ENCODE measurements at regions of chr14 and their contacts with region 1.

Region 1: DNA sequence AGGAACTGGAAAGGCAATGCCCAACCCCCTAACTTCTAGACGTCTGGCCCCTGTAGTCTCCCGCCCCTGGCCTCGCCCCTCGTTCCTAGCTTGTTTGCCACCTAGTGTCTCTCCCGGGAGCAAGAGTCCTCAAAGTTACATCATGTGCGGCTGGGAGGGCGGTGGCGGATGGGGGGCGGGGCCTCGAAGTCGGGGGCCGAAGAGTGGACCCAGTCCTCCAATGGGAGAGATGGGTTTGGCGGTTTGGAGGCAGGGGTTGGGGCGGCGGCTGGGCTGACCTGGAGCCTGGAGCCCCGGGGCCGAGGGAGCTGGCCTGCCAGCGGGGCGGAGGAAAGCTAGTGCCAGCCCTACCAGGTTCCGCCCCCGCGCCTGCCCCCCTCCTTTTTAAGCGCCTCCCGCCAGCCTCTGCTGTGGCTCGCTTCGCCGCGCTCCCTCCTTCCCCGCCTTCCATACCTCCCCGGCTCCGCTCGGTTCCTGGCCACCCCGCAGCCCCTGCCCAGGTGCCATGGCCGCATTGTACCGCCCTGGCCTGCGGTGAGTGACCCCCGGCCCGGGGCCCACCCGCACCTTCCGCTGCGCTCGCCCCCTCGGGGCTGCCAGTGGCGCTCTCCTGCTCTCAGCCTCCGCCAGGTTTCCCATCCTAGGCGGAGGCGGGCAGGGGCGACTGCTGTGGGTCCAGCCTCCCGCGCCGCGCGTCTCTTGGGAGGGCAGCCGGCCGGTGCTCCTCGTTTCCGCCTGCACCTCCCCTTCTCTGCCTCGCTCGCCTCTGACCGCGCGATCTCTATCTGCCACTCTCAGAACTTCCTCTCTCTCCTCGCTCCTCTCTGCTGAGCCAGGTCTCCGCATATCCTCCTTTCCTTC is at the start of gene PCK2:
- DNase-seq: peak; percentile 87
- H3K4me3 Mint-ChIP-seq: peak within 1 kb of the TSS; percentile 100
- H3K27ac Mint-ChIP-seq: peak within 1 kb of the TSS; percentile 96
- H3K4me1 Mint-ChIP-seq: peaks cover 38% of the 10 kb centered on the region
- H3K27me3 Mint-ChIP-seq: no peaks in the 10 kb centered on the region
- total RNA-seq, gene PCK2: 88.5 to 90.6 TPM

Region 2: DNA sequence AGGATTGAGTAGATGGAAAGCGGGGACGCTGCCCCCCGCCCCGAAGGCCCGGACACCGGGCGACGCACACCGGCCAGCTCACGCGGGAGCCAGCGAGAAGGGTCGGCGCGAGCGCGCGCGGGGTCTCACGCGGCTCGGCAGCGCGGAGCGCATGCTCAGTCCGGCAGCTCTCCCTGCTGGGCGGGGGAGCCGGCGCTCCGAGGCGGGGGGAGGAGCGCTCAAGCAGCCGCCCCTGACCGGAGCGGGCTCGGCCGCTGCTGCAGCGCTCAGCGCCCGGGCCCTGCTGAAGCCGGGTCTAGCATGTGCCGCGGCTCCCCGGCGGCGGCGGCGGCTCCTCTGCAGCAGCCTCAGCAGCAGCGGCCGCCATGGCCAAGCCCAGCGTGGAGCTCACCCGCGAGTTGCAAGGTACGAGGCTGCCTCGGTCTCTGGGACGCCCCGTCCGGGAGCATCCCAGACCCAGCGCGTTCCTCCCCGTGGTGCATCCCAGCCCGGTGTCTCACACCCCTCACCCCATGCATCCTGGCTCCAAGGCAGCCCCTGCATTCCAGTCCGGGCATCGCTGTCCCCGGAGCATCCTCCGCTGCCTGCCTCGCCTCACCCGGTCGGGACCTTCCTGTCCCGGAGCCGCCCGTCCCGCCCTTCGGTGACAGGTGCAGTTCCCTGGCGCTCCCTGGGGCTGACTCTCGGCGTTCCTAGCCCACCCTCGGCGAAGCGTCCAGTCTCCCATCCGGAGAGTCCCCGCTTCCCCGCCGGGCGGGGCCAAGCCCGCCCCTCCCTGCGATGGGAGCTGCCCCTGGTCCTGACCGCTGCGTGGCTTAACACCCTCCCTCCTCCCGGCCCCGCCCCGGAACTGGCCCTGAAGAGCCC is 42.1 kb before region 1 on chr14 and contains the start of gene CARMIL3:
- CTCF ChIA-PET with region 1: interaction called, 216 read pairs
- POLR2A ChIA-PET with region 1: interaction called, 53 read pairs
- DNase-seq: peak; percentile 72
- H3K4me3 Mint-ChIP-seq: peak within 1 kb of the TSS; percentile 69
- H3K27ac Mint-ChIP-seq: no peak within 1 kb of the TSS
- H3K4me1 Mint-ChIP-seq: peaks cover 23% of the 10 kb centered on the region
- H3K27me3 Mint-ChIP-seq: peaks cover 26% of the 10 kb centered on the region
- total RNA-seq, gene CARMIL3: 3.7 to 4.2 TPM

Region 3: GRCh38 chr14:24058260-24058950 is 35.7 kb before region 1 on chr14:
- CTCF ChIA-PET with region 1: interaction called, 216 read pairs
- POLR2A ChIA-PET with region 1: interaction called, 53 read pairs
- DNase-seq: peak; percentile 76
- H3K4me3 Mint-ChIP-seq: no peak overlapping the region
- H3K27ac Mint-ChIP-seq: peak overlapping the region; percentile 38
- H3K4me1 Mint-ChIP-seq: peaks cover 9% of the 10 kb centered on the region
- H3K27me3 Mint-ChIP-seq: peaks cover 8% of the 10 kb centered on the region

Region 4: GRCh38 chr14:24080888-24081738 is 13.0 kb before region 1 on chr14:
- CTCF ChIA-PET with region 1: interaction called, 82 read pairs
- POLR2A ChIA-PET with region 1: interaction called, 105 read pairs
- DNase-seq: peak; percentile 83
- H3K4me3 Mint-ChIP-seq: peak overlapping the region; percentile 74
- H3K27ac Mint-ChIP-seq: peak overlapping the region; percentile 75
- H3K4me1 Mint-ChIP-seq: peaks cover 32% of the 10 kb centered on the region
- H3K27me3 Mint-ChIP-seq: peaks cover 11% of the 10 kb centered on the region

Region 5: GRCh38 chr14:24135834-24136542 is 41.9 kb after region 1 on chr14 and contains the start of gene PSME1:
- CTCF ChIA-PET with region 1: interaction called, 6 read pairs
- POLR2A ChIA-PET with region 1: interaction called, 22 read pairs
- DNase-seq: peak; percentile 96
- H3K4me3 Mint-ChIP-seq: peak within 1 kb of the TSS; percentile 93
- H3K27ac Mint-ChIP-seq: peak within 1 kb of the TSS; percentile 89
- H3K4me1 Mint-ChIP-seq: peaks cover 53% of the 10 kb centered on the region
- H3K27me3 Mint-ChIP-seq: no peaks in the 10 kb centered on the region
- total RNA-seq, gene PSME1: 391 to 397 TPM

Region 6: DNA sequence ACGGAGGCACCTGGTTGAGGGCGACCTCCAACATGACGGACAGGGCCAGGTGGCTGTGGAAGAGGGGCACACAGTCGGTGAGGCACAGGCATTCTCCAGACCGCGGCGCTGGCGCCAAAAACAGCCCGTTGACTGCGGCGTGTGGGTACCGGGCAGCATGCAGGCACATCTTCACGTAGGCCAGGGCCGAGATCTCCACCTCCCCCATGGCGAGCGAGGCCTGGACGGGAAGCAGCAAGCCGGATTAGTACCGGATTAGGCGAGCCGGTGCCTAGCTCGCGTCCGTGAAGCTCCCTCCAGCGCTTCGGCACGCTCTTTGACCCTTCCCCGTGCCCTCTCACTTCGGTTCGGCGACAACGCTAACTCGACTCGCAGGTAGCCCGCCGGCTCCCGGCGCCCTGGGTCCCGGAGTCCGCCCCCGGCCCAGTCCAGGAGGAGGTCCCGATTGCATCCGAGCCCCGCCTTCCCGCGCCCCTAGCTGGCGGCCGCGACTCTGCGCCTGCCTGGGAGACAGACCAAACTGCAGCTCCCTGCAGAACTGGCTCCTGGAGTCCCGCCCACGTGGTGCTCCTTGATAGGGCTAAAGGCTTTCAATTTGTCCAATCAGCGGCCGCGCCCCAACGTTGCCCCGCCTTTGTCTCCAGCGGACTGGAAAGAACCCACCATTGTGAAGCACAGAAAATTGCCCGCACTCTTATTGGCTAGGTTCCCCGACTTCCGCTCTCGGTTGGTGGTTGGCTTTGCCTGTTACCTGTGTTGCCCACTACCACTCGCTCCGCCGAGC is 47.2 kb after region 1 on chr14 and contains the start of gene EMC9:
- CTCF ChIA-PET with region 1: interaction called, 7 read pairs
- POLR2A ChIA-PET with region 1: interaction called, 30 read pairs
- DNase-seq: peak; percentile 100
- H3K4me3 Mint-ChIP-seq: peak within 1 kb of the TSS; percentile 93
- H3K27ac Mint-ChIP-seq: peak within 1 kb of the TSS; percentile 92
- H3K4me1 Mint-ChIP-seq: peaks cover 73% of the 10 kb centered on the region
- H3K27me3 Mint-ChIP-seq: no peaks in the 10 kb centered on the region
- total RNA-seq, gene EMC9: 45.0 to 51.7 TPM

Region 7: DNA sequence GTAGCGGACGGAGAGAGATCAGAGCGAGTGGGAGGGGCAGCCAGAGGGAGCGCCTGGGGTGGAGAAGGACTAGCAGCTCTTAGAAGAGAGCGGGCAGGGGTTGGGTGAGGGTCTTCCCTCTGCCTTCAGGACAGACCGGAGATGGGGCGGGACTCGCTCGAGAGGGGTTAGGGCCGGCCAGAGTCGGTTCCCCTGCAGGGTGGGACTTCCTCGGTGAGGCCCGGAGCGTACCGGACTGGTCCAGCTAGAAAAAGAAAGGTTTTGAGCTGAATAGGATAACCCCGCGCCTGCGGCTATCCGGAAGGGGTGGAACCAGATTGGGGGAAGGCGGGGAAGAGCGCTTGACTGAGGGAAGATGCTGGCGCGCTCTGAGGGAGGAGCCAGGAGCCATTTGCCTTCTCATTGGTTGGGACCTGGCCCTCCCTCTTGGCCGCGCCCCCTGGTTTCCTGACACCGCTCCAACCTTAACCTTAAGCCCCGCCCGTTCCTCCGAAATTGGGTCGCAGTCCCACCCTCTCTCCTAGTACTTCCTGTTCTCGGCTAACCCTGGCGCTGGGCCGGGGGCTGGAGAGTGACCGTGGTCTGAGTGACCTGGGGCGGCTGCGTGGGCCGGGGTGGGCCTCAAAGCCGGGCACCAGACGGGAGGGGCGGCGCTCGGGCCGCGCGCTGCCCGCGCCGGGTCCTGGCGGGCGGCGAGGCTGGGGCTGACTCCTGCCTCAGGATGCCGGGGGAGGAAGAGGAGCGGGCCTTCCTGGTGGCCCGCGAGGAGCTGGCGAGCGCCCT is 53.0 kb after region 1 on chr14 and contains the start of gene RNF31:
- CTCF ChIA-PET with region 1: interaction called, 7 read pairs
- POLR2A ChIA-PET with region 1: interaction called, 30 read pairs
- DNase-seq: peak; percentile 99
- H3K4me3 Mint-ChIP-seq: peak within 1 kb of the TSS; percentile 96
- H3K27ac Mint-ChIP-seq: peak within 1 kb of the TSS; percentile 99
- H3K4me1 Mint-ChIP-seq: peaks cover 58% of the 10 kb centered on the region
- H3K27me3 Mint-ChIP-seq: no peaks in the 10 kb centered on the region
- total RNA-seq, gene RNF31: 122 to 129 TPM

Region 8: GRCh38 chr14:24207104-24207551 is 113.0 kb after region 1 on chr14:
- CTCF ChIA-PET with region 1: no interaction called
- POLR2A ChIA-PET with region 1: no interaction called
- DNase-seq: no peak
- H3K4me3 Mint-ChIP-seq: no peak overlapping the region
- H3K27ac Mint-ChIP-seq: no peak overlapping the region
- H3K4me1 Mint-ChIP-seq: peaks cover 29% of the 10 kb centered on the region
- H3K27me3 Mint-ChIP-seq: no peaks in the 10 kb centered on the region

Measured in activated CD4-positive, alpha-beta memory T cell treated with anti-CD3 and anti-CD28 coated beads, Interleukin-2, amount 10 ng/mL, durations not matched to agents 7 days and 5 days (primary cell).